ENCODE measurements at regions of chr2 and their contacts with region 1.

Region 1: DNA sequence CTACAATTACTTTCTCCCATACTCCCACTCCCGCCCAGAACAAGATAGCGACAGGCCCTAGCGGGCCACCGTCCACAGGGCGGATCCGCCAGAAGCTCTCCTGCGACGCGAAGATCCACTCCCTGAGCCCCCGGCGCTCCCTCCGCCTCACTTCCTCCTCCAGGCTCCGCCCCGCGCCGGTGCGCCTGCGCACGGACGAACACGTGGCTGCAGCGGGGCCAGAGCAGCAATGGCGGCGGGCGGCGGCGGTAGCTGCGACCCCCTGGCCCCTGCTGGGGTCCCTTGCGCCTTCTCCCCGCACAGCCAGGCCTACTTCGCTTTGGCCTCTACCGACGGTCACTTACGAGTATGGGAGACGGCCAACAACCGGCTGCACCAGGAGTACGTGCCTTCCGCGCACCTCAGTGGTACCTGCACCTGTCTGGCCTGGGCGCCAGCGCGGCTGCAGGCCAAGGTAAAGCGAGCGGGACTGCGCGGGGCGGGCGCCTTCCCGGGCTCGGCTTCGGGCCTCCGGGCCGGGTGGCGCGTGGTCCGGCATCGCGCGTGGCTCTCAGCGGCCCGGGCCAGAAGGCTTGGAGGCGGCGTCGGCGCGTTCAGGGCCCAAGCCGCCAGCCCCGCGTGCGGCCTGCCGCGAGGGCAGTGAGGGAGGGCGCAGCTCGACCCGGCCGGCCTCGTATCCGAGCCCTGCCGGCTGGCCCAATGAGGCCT is at the start of gene WDR43:
- H3K4me3 Mint-ChIP-seq: peak within 1 kb of the TSS; percentile 99
- H3K27ac Mint-ChIP-seq: peak within 1 kb of the TSS; percentile 88
- H3K4me1 Mint-ChIP-seq: peaks cover 26% of the 10 kb centered on the region
- H3K27me3 Mint-ChIP-seq: no peaks in the 10 kb centered on the region

Region 2: DNA sequence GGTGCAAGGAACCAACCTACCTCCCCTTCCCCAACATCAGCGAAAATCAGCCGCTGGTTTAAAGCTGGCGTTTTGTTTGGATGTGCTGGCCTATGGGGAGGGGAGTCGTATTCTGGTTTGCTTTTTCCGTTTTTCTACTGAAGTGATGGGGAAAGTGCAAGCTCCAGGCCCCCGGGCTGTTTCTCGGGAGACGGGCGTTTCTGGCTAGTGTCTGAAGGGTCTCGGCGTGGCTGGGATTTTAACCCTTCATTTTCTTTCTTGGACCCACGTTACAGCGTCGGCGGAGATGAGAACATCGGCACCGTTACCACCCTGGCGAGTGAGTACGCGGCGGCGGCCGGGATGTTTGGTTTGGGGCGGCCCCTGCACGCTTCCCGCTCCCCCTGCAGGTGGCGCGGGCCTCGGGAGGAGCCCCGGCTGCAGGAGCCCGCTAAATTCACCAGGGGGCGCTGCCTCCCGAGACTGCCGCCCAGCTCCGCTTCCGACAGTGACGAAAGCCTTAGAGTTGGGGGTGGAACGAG is 328.0 kb before region 1 on chr2:
- intact Hi-C with region 1: loop called (anchors 10 kb)
- H3K4me3 Mint-ChIP-seq: peak overlapping the region; percentile 88
- H3K27ac Mint-ChIP-seq: peak overlapping the region; percentile 90
- H3K4me1 Mint-ChIP-seq: no peaks in the 10 kb centered on the region
- H3K27me3 Mint-ChIP-seq: no peaks in the 10 kb centered on the region

Region 3: DNA sequence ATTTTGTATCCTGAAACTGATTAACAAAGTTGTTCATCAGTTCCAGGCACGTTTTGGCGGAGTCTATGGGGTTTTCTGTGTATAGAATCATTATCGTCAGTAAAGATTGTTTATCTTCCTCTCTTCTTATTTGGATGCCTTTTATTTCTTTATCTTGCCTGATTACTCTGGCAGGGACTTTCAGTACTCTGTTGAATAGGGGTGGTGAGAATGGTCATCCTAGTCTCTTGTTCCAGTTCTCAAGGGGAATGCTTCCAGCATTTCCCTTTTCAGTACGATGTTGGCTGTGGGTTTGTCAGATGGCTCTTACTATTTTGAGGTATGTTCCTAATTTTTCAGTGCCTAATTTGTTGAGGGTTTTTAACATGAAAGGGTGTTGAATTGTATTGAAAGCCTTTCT is 98.0 kb before region 1 on chr2:
- intact Hi-C with region 1: no loop called
- H3K4me3 Mint-ChIP-seq: no peak overlapping the region
- H3K27ac Mint-ChIP-seq: no peak overlapping the region
- H3K4me1 Mint-ChIP-seq: peaks cover 29% of the 10 kb centered on the region
- H3K27me3 Mint-ChIP-seq: no peaks in the 10 kb centered on the region

Region 4: GRCh38 chr2:28870146-28870891 is 24.3 kb before region 1 on chr2 and contains the start of gene TRMT61B:
- intact Hi-C with region 1: loop called (anchors 1 kb)
- H3K4me3 Mint-ChIP-seq: peak within 1 kb of the TSS; percentile 95
- H3K27ac Mint-ChIP-seq: peak within 1 kb of the TSS; percentile 93
- H3K4me1 Mint-ChIP-seq: peaks cover 26% of the 10 kb centered on the region
- H3K27me3 Mint-ChIP-seq: peaks cover 1% of the 10 kb centered on the region

Region 5: GRCh38 chr2:29223851-29224694 is 329.4 kb after region 1 on chr2:
- intact Hi-C with region 1: no loop called
- H3K4me3 Mint-ChIP-seq: no peak overlapping the region
- H3K27ac Mint-ChIP-seq: no peak overlapping the region
- H3K4me1 Mint-ChIP-seq: no peaks in the 10 kb centered on the region
- H3K27me3 Mint-ChIP-seq: peaks cover 18% of the 10 kb centered on the region

Region 6: GRCh38 chr2:30201990-30202389 is 1307.4 kb after region 1 on chr2:
- intact Hi-C with region 1: no loop called
- H3K4me3 Mint-ChIP-seq: no peak overlapping the region
- H3K27ac Mint-ChIP-seq: no peak overlapping the region
- H3K4me1 Mint-ChIP-seq: peaks cover 14% of the 10 kb centered on the region
- H3K27me3 Mint-ChIP-seq: peaks cover 17% of the 10 kb centered on the region